Motor neuron (in vitro differentiated cells): ENCODE measurements at regions of chr3 and their contacts with region 1.

Region 1: DNA sequence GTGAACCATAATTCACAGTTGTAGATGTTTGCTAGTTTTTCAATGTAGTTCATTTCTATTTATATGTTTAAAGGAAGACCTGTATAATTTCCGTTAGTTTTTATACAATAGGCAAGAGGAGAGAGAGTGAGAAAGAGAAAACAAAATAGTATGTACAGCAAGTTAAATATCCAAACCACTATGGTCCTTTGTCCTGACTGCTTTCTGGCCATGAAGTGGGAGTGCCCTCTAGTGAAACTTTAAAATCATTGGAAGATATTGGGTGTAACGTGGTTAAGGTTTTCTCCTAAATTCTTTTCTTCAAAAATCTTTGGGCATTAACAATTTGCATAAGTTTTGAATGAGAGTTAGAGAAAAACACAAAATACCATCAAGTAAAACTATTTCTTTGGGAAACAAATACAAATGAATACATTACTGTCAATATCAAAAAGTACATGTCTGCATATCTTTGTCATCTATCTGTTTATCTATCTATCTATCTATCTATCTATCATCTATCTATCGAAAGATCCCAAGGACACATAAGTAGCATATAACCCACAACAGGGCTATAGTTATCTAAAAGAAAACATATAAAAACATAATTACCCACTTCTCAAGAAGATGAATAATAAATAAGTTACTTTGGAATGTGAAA is 534.6 kb upstream of the ATP11B start:
- ATAC-seq: peak in 7 of 8 experiments; percentile 38 to 72 (median 62)
- H3K4me3 ChIP-seq: no peak overlapping the region
- H3K27ac ChIP-seq: no peak overlapping the region
- H3K4me1 ChIP-seq: peaks cover 32 to 34% of the 10 kb centered on the region in 2 donors

Region 2: DNA sequence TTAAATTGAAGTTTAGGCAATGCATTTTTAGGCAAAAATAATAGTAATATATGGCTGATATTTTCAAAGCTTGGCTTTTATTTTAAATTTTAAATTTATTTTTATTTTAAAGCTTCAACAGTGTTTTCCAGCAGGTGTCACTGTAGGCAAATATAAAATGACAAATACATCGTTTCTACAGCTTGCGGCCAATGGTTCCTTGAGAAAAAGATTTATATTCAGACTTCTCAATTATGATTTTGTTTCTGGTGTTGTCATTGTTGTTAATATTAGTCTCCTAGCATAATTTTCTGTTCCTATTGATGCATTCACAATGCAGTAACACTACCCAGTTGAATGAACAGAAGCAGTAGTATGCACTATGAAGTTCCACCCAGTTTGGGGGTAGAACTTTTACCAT is 1048.4 kb before region 1 on chr3:
- in situ Hi-C with region 1: loop called in 1 of 9 experiments (anchors 25 kb)
- ATAC-seq: no peak
- H3K4me3 ChIP-seq: no peak overlapping the region
- H3K27ac ChIP-seq: no peak overlapping the region
- H3K4me1 ChIP-seq: no peaks in the 10 kb centered on the region

Region 3: DNA sequence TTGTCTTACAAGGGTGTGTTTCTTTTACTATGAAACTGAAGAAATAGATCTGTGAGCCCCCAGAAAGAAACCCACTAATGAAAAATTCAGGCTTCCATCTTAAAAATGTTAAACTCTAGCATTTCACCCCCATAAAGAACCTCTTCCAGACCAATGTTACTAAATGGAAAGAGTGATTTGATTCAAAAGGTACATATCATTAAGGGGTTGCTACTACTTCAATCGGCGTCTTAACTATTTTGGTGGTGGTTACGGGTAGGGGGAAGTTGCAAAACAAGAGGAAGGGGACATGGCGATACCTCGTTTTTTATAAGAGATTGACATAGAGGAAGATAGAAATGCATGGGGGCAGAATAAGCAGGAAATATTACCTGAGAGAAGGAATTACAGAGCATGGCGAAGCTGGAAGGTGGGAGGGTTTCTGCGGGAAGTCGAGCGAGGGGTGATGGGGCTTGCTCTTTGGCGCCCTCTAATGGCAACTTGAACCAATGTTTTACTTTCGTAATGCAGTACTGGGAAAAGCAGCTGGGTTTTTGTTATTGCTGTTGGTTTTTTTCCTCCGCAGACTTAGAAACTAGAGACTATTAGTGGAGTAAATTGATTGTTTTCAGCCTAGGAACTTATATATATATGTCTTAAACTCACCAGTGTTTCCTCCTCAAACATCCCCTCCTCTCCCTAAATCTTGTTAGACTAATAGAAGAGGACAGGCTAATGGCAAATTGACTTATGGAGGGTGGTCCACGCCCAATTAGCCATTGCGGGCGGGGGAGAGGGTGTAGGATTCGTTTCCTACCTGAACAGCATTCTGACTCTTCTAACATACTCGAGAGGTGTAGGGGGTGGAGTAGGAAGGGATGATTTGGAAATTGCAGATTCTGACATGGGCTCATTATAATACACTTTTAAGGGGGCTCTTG is 558.2 kb before region 1 on chr3:
- in situ Hi-C with region 1: loop called in 4 of 9 experiments (anchors 10 to 25 kb)
- ATAC-seq: peak; percentile 47 to 85 (median 68)
- H3K4me3 ChIP-seq: peak overlapping the region in 2 of 5 donors; percentile 17 to 38
- H3K27ac ChIP-seq: no peak overlapping the region
- H3K4me1 ChIP-seq: peaks cover 20 to 31% of the 10 kb centered on the region in 2 donors

Region 4: GRCh38 chr3:181726351-181727330 is 532.0 kb before region 1 on chr3:
- in situ Hi-C with region 1: loop called in 5 of 9 experiments (anchors 10 to 25 kb)
- ATAC-seq: peak in 5 of 8 experiments; percentile 65 to 71 (median 69)
- H3K4me3 ChIP-seq: peak overlapping the region; percentile 21 to 42 (median 36)
- H3K27ac ChIP-seq: peak overlapping the region; percentile 91 to 92
- H3K4me1 ChIP-seq: peaks cover 54 to 82% of the 10 kb centered on the region in 2 donors

Region 5: GRCh38 chr3:181739628-181740027 is 519.0 kb before region 1 on chr3:
- in situ Hi-C with region 1: loop called in 2 of 9 experiments (anchors 10 to 25 kb)
- ATAC-seq: no peak
- H3K4me3 ChIP-seq: no peak overlapping the region
- H3K27ac ChIP-seq: no peak overlapping the region
- H3K4me1 ChIP-seq: peaks cover 32 to 37% of the 10 kb centered on the region in 2 donors

Region 6: DNA sequence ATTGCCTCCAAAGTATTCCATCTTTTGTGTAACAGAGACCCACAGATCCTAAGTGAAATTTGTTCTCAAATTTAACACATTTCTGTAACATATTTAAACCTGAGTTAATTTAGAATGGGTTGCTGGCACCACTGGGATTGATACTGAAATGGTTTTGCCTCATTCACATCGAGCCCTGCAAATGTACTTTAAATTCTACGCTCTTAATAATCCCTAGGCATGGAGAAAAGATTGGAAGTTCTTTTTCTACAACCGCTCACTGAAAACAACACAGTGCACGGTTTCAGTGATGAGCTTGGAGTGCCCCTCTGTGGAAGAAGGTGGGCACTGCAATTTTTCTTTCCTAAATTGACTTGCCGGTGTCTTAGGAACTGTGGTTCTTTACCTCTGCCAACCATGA is 424.8 kb after region 1 on chr3:
- in situ Hi-C with region 1: loop called in 1 of 9 experiments (anchors 25 kb)
- ATAC-seq: peak; percentile 69 to 84 (median 74)
- H3K4me3 ChIP-seq: peak overlapping the region in 2 of 5 donors; percentile 51 to 61
- H3K27ac ChIP-seq: no peak overlapping the region
- H3K4me1 ChIP-seq: peaks cover 5 to 6% of the 10 kb centered on the region in 2 donors